Natural killer cell (primary cell): ENCODE measurements at regions of chr13 and their contacts with region 1.

Region 1: GRCh38 chr13:25375727-25376358 is 4.1 kb downstream of the ATP8A2 start:
- DNase-seq: peak in 1 of 2 donors; percentile 67
- ATAC-seq: peak in 2 of 3 donors; percentile 56 to 69
- H3K4me3 ChIP-seq: no peak overlapping the region
- H3K4me3 Mint-ChIP-seq: no peak overlapping the region
- H3K27ac ChIP-seq: no peak overlapping the region
- H3K27ac Mint-ChIP-seq: no peak overlapping the region
- H3K4me1 ChIP-seq: peaks cover 2% of the 10 kb centered on the region
- H3K4me1 Mint-ChIP-seq: no peaks in the 10 kb centered on the region
- H3K27me3 ChIP-seq: peaks cover 23% of the 10 kb centered on the region
- H3K27me3 Mint-ChIP-seq: peaks cover 43 to 70% of the 10 kb centered on the region in 2 donors
- CTCF ChIP-seq: peak; percentile 76

Region 2: GRCh38 chr13:24995226-24995804 is 380.5 kb before region 1 on chr13:
- intact Hi-C with region 1: loop called (anchors 2 kb)
- DNase-seq: peak in 1 of 2 donors; percentile 81
- ATAC-seq: peak; percentile 73 to 82 (median 79)
- H3K4me3 ChIP-seq: no peak overlapping the region
- H3K4me3 Mint-ChIP-seq: no peak overlapping the region
- H3K27ac ChIP-seq: no peak overlapping the region
- H3K27ac Mint-ChIP-seq: no peak overlapping the region
- H3K4me1 ChIP-seq: no peaks in the 10 kb centered on the region
- H3K4me1 Mint-ChIP-seq: peaks cover 4 to 5% of the 10 kb centered on the region in 2 donors
- H3K27me3 ChIP-seq: no peaks in the 10 kb centered on the region
- H3K27me3 Mint-ChIP-seq: peaks cover 25 to 31% of the 10 kb centered on the region in 2 donors
- CTCF ChIP-seq: peak; percentile 86

Region 3: DNA sequence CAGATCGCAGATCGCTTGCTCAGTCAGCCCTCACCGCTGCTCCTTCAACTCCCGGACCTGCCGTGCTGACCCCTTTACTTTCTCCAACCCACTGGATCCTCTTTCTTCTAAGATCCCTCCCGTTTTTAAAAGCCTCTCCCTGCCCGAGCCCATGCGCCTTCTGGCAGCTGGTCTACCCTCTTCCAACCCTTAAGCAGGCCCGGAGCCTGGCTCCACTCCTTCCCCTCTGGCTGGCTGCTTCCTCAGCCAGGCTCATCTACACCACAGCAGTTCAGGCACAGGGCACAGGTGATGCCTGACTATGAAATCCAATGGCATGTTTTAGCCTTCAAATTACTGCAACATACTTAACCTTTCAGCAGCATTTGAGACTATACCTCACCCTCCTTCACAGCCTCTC is 343.7 kb before region 1 on chr13:
- intact Hi-C with region 1: no loop called
- DNase-seq: no peak
- ATAC-seq: no peak
- H3K4me3 ChIP-seq: no peak overlapping the region
- H3K4me3 Mint-ChIP-seq: no peak overlapping the region
- H3K27ac ChIP-seq: no peak overlapping the region
- H3K27ac Mint-ChIP-seq: no peak overlapping the region
- H3K4me1 ChIP-seq: no peaks in the 10 kb centered on the region
- H3K4me1 Mint-ChIP-seq: no peaks in the 10 kb centered on the region
- H3K27me3 ChIP-seq: no peaks in the 10 kb centered on the region
- H3K27me3 Mint-ChIP-seq: peaks cover 14 to 56% of the 10 kb centered on the region in 2 donors
- CTCF ChIP-seq: no peak

Region 4: DNA sequence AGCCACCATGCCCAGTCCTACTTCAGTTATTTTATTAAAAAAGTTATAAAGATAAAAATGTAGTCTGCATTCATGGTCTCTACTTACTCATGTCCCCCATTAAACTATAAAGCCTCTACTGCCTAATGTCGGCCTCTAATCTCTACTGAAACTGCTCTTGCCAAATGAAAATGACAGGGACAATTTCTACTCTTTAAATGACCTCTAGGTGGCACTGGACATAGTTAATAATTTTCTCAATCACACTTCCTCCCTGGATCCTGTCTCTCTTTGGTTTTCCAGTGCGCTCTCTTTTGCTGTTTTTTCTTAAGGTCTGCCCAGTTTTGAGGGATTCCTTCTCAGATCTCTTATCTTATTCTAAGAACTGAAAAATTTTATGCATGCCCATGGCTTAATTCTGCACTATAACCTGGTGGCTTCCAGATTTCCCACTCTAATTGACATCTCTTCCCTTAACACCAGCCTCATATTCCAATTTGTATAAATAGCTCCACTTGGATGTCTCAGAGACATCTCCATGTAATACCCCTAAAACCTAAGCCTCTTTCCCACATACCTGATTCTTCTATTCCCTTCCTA is 142.8 kb before region 1 on chr13:
- intact Hi-C with region 1: loop called (anchors 2 kb)
- DNase-seq: peak in 1 of 2 donors; percentile 45
- ATAC-seq: peak in 2 of 3 donors; percentile 40 to 60
- H3K4me3 ChIP-seq: no peak overlapping the region
- H3K4me3 Mint-ChIP-seq: no peak overlapping the region
- H3K27ac ChIP-seq: no peak overlapping the region
- H3K27ac Mint-ChIP-seq: no peak overlapping the region
- H3K4me1 ChIP-seq: no peaks in the 10 kb centered on the region
- H3K4me1 Mint-ChIP-seq: peaks cover 9 to 12% of the 10 kb centered on the region in 2 donors
- H3K27me3 ChIP-seq: no peaks in the 10 kb centered on the region
- H3K27me3 Mint-ChIP-seq: peaks cover 0 to 9% of the 10 kb centered on the region in 2 donors
- CTCF ChIP-seq: peak; percentile 64